Activated CD8-positive, alpha-beta memory T cell treated with anti-CD3 and anti-CD28 coated beads, Interleukin-2, amount 10 ng/mL, durations not matched to agents 7 days and 5 days (primary cell): ENCODE measurements at regions of chr22 and their contacts with region 1.

Region 1: DNA sequence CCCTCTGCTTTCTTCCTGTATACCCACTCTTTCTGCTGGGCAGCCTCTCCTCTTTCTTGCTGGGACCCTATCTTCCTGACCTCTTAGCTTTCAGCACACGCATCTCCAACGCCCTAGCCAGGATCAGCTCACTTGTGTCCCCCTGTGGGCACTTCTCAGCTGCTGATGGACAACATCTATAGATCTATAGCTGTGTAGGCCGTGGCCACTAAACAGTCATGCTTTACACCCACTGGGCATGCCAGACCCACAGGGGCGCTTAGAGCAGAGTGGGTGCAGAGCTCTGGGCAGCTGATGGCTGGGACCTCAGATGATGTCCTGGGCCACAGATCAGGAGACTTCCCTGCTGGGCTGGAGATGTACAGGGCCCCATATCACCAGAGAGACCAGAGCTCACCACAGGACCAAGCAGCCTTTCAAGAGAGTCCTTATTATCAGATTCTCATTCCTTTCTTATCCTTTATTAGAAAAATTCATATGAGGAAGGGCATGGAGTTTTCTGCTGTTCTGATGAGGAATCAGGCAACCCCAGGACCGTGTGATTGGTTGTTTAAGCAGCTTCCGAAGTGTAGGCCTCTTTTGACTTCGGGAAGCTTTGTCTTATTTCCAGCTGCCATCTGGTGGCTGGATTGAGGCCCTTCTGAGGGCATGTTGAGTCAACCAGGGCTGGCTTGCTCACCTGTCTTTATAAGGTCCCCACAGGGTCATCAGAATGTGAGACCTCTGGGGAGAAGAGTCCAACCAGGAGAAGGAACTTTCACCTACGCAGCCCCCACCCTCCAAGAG is 60.5 kb downstream of the OSBP2 start:
- DNase-seq: peak; percentile 79
- ATAC-seq: peak; percentile 90
- H3K4me3 Mint-ChIP-seq: no peak overlapping the region
- H3K27ac Mint-ChIP-seq: no peak overlapping the region
- H3K4me1 Mint-ChIP-seq: peaks cover 10% of the 10 kb centered on the region
- H3K27me3 Mint-ChIP-seq: no peaks in the 10 kb centered on the region

Region 2: GRCh38 chr22:30408414-30409104 is 346.6 kb before region 1 on chr22:
- CTCF ChIA-PET with region 1: no interaction called
- DNase-seq: no peak
- ATAC-seq: no peak
- H3K4me3 Mint-ChIP-seq: no peak overlapping the region
- H3K27ac Mint-ChIP-seq: no peak overlapping the region
- H3K4me1 Mint-ChIP-seq: peaks cover 7% of the 10 kb centered on the region
- H3K27me3 Mint-ChIP-seq: no peaks in the 10 kb centered on the region

Region 3: DNA sequence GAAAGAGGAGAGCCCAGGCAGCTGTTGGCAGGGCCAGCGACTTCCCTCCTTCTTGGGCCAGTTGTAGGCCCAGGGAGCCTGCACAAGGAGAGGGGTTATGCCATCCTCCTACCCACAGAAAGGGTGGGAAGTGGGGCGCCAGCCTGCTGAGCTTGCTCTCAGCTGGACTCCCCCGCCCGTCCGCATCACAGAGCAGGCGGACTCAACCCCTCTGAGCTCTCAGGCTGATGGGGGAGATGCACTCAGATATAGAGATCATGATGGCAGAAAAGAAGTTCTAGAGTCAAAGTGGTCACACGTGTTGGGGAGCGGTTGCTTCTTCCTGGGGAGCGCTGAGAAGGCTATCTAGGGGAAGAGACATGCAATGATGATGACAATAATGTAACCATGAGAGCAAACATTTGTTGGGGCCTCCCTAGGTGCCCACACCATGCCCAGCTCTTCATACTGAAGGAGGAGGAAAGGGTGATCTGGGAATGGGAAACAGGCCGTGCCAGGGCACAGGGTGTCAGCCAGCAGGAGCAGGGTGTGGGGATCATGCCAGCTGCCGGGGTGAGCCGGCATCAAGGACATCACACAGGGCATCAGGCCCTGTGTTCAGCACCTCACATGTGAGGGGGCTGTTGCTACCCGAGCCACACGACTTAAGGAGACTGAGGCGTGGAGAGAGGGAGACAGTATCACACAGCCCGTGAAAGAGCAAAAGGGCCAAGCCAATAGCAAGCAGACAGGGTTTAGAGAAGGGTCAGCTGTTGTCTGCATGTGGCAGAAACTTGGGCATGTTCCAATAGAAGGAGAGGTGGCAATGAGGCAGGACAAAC is 111.9 kb before region 1 on chr22:
- CTCF ChIA-PET with region 1: interaction called, 186 read pairs
- DNase-seq: no peak
- ATAC-seq: no peak
- H3K4me3 Mint-ChIP-seq: no peak overlapping the region
- H3K27ac Mint-ChIP-seq: peak overlapping the region; percentile 45
- H3K4me1 Mint-ChIP-seq: peaks cover 24% of the 10 kb centered on the region
- H3K27me3 Mint-ChIP-seq: no peaks in the 10 kb centered on the region

Region 4: DNA sequence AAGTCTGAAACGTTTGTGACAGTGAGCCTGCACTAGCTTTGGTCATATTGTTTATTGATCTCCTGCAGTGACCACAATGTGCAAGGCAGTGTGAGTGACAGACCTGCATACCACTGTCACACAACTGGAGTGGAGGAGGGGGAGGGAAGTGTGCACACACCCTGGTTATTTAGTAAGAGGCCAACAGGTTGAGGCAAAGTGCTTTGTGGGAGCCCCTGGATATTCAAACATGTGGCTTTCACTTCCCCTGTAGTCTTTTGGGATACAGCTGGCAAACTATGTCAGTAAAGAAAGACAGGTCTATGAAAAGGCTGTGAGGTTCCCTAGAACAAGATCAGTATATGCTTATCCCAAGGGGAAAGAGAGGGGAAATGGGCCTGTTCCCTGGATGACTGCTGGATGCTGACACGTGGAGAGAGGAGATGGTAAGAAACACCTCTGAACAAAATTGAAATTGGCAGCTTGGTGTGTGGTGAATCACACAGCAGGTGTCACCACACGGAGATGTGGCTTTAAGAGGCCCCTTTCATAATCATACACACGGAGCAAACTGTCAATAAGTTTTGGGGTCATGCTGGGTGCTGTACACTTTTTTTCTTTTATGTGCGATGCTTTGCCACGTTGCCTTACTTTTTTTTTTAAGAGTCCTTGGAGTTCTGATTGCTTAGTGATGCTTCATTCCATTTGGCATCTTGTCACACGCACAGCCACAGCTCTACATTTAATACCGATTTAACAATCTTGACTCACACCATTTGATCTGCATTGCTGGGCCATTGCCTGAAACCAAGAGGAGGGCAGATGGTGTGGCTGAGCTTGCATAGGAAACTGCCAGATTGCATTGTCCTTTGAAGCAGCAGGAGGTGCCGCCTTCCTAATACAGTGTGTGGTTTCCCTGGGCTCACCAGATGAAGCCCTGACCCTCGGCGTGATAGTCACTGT is 49.2 kb before region 1 on chr22:
- CTCF ChIA-PET with region 1: interaction called, 16 read pairs
- DNase-seq: peak; percentile 77
- ATAC-seq: peak; percentile 79
- H3K4me3 Mint-ChIP-seq: peak overlapping the region; percentile 15
- H3K27ac Mint-ChIP-seq: peak overlapping the region; percentile 93
- H3K4me1 Mint-ChIP-seq: peaks cover 42% of the 10 kb centered on the region
- H3K27me3 Mint-ChIP-seq: no peaks in the 10 kb centered on the region

Region 5: DNA sequence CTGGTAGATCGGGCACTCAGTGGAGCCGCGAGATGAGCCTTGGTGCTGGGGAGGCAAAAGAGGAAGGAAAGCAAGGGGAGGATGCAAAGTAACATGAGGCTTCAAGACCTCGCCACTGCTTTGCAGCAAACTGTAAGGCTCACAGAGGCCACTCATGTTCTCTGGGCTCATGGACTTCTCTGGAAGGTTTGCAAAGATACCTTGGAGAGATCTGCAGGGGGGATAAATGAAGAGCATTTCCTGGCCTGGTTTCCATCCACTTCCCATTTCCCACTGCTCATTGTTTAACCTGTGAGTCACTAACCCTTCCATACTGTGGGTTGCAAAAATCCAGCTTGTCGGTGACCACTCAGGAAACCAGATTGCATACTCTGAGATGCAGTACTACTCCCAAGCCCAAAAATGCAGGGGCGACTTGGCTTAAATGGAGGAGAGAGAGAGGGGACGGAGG is 22.0 kb before region 1 on chr22:
- CTCF ChIA-PET with region 1: interaction called, 11 read pairs
- DNase-seq: no peak
- ATAC-seq: no peak
- H3K4me3 Mint-ChIP-seq: no peak overlapping the region
- H3K27ac Mint-ChIP-seq: no peak overlapping the region
- H3K4me1 Mint-ChIP-seq: no peaks in the 10 kb centered on the region
- H3K27me3 Mint-ChIP-seq: no peaks in the 10 kb centered on the region

Region 6: GRCh38 chr22:30742291-30743256 is 12.6 kb before region 1 on chr22:
- CTCF ChIA-PET with region 1: interaction called, 55 read pairs
- DNase-seq: peak; percentile 73
- ATAC-seq: peak; percentile 50
- H3K4me3 Mint-ChIP-seq: peak overlapping the region; percentile 52
- H3K27ac Mint-ChIP-seq: peak overlapping the region; percentile 98
- H3K4me1 Mint-ChIP-seq: peaks cover 77% of the 10 kb centered on the region
- H3K27me3 Mint-ChIP-seq: no peaks in the 10 kb centered on the region